Thyroid gland (tissue), 4 donors: ENCODE measurements at regions of chr11 and their contacts with region 1.

Region 1: GRCh38 chr11:96342961-96343711 is at the start of gene MAML2:
- DNase-seq: peak; percentile 92 to 95
- H3K4me3 ChIP-seq: peak within 1 kb of the TSS; percentile 52 to 94 (median 58)
- H3K27ac ChIP-seq: peak within 1 kb of the TSS; percentile 83 to 90 (median 86)
- H3K4me1 ChIP-seq: peaks cover 31 to 37% of the 10 kb centered on the region in 2 donors
- H3K27me3 ChIP-seq: no peaks in the 10 kb centered on the region
- CTCF ChIP-seq: peak; percentile 77 to 99 (median 94)
- POLR2A ChIP-seq: peak in 1 of 2 donors; percentile 56
- total RNA-seq, gene MAML2: 19.0 to 36.4 (median 31.4) TPM

Region 2: GRCh38 chr11:95999599-96000406 is 343.3 kb before region 1 on chr11:
- intact Hi-C with region 1: loop called (anchors 10 kb)
- DNase-seq: no peak
- H3K4me3 ChIP-seq: no peak overlapping the region
- H3K27ac ChIP-seq: peak overlapping the region; percentile 65 to 89 (median 84)
- H3K4me1 ChIP-seq: peaks cover 43 to 45% of the 10 kb centered on the region in 2 donors
- H3K27me3 ChIP-seq: no peaks in the 10 kb centered on the region
- CTCF ChIP-seq: no peak
- POLR2A ChIP-seq: no peak

Region 3: DNA sequence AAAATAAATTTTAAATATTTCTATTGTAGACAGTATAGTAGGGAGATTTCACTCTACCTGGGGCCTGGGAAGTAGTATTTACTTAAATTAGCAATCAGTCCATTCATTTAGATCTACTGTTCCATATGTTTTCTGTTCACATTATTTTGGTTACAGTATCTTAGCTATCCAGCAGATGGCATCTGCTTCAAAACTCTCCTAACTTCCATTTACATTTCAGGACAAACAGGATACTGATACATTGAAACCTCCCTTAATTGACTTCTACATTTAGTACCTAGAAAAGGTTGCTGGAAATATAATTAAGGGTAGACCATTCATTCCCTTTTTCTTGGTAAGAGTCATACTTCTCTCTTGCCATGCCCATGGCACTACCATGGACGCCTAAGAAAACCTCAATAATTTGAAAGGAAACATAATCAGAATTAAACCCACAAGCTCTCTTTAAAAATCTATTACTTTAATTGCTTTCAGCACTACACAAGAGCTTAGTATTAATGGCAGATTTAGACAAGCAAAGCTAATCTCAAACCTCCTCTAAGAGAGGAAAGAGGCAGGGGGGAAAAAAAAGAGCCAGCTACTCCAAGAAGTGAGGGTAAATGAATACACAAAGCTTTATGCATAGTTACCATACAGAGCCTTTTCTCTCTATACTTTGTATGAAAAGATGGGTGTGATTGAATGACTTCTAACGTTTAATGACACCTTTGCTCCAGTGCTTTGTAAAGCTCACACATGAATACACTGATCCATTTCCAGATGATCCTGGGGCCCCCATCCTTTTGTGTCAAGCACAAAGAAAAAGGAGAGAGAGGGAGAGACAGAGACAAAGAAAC is 288.0 kb before region 1 on chr11:
- intact Hi-C with region 1: loop called (anchors 5 kb)
- DNase-seq: no peak
- H3K4me3 ChIP-seq: no peak overlapping the region
- H3K27ac ChIP-seq: peak overlapping the region in 1 of 3 donors; percentile 7
- H3K4me1 ChIP-seq: peaks cover 22 to 28% of the 10 kb centered on the region in 2 donors
- H3K27me3 ChIP-seq: no peaks in the 10 kb centered on the region
- CTCF ChIP-seq: peak in 5 of 6 experiments; percentile 16 to 83 (median 71)
- POLR2A ChIP-seq: no peak

Region 4: GRCh38 chr11:96447208-96448110 is 104.3 kb after region 1 on chr11:
- intact Hi-C with region 1: no loop called
- DNase-seq: no peak
- H3K4me3 ChIP-seq: no peak overlapping the region
- H3K27ac ChIP-seq: no peak overlapping the region
- H3K4me1 ChIP-seq: no peaks in the 10 kb centered on the region
- H3K27me3 ChIP-seq: no peaks in the 10 kb centered on the region
- CTCF ChIP-seq: no peak
- POLR2A ChIP-seq: no peak

Region 5: GRCh38 chr11:96459751-96460150 is 116.6 kb after region 1 on chr11:
- intact Hi-C with region 1: no loop called
- DNase-seq: no peak
- H3K4me3 ChIP-seq: no peak overlapping the region
- H3K27ac ChIP-seq: no peak overlapping the region
- H3K4me1 ChIP-seq: no peaks in the 10 kb centered on the region
- H3K27me3 ChIP-seq: no peaks in the 10 kb centered on the region
- CTCF ChIP-seq: no peak
- POLR2A ChIP-seq: no peak

Region 6: DNA sequence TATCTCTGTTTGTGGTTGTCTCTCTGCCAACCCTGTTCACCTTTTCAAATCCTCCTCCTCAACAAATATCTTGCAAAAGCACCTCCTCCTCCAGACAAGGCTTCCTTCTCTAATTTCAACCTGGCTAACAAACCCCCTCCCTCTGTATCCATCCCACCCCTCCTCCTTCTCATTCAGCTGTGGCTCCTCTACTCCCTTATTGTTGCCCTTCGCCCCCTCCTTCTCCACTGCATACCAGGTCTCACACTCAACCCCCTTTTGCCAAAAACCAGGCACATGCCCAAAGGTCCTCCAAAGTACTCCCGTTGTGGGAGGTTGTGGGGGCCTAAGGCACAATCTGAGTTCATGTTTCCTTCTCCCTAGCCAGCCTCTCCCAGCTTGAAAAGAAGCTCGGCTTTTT is 157.3 kb after region 1 on chr11:
- intact Hi-C with region 1: no loop called
- DNase-seq: no peak
- H3K4me3 ChIP-seq: no peak overlapping the region
- H3K27ac ChIP-seq: no peak overlapping the region
- H3K4me1 ChIP-seq: no peaks in the 10 kb centered on the region
- H3K27me3 ChIP-seq: no peaks in the 10 kb centered on the region
- CTCF ChIP-seq: no peak
- POLR2A ChIP-seq: no peak